ENCODE measurements at regions of chr3 and their contacts with region 1.

Region 1: GRCh38 chr3:123028233-123028828 is 768 bp upstream of the SEMA5B start:
- DNase-seq: peak in 2 of 5 donors; percentile 19 to 23
- H3K4me3 ChIP-seq: peak overlapping the region; percentile 47
- H3K4me3 Mint-ChIP-seq: peak overlapping the region; percentile 73 to 87 (median 83)
- H3K27ac ChIP-seq: no peak overlapping the region
- H3K27ac Mint-ChIP-seq: peak overlapping the region in 3 of 8 donors; percentile 1 to 24 (median 4)
- H3K4me1 ChIP-seq: peaks cover 5% of the 10 kb centered on the region
- H3K4me1 Mint-ChIP-seq: peaks cover 13 to 24% (median 15%) of the 10 kb centered on the region in 3 donors
- H3K27me3 ChIP-seq: peaks cover 46% of the 10 kb centered on the region
- H3K27me3 Mint-ChIP-seq: peaks cover 38 to 50% of the 10 kb centered on the region in 2 donors

Region 2: DNA sequence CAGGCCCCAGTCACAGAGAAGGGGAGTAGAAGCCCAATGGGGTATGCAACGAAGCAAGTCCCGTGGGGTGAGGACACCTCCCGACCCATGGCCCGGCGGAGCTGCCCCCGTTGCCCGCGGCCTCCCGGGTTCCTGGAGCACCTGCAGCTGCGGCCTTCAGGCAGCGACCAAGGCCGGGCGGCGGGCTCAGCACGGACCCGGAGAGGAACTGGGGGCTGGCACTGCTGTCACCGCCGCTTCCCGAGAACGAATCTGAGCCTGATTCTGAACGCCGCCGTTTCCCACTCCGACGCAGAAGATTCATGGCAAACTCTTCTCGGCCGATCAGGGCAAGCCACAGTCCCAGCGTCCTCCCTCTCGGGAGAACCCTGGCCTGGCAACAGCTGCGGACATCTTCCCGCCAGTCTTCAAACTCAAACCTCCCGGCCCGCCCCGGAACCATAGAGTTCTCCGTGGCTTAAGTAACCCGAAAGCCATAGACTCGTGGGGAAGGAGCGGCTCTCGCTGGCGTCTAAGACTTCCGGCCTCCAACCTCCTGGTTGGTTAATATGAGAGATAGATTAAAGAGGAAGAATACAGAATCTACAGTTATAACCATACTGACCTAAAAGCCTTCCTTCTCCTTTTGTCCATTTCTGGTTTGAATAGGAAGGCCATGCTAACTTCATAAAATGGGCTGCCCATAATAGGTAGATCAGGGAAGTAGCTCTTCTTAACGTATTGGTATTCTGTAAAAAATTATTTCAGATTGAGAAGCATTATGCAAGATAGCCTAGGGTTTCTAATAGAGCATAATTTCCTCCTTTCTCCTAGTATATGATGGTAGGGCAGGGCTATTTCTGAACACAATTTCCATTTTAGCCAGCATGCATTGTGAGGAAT is 1482.5 kb before region 1 on chr3 and contains the start of gene POLQ:
- CTCF ChIA-PET with region 1: interaction called, 11 read pairs
- POLR2A ChIA-PET with region 1: no interaction called
- DNase-seq: peak; percentile 74 to 91 (median 83)
- H3K4me3 ChIP-seq: peak within 1 kb of the TSS; percentile 78
- H3K4me3 Mint-ChIP-seq: peak within 1 kb of the TSS; percentile 83 to 95 (median 90)
- H3K27ac ChIP-seq: peak within 1 kb of the TSS; percentile 69
- H3K27ac Mint-ChIP-seq: peak within 1 kb of the TSS; percentile 80 to 92 (median 90)
- H3K4me1 ChIP-seq: no peaks in the 10 kb centered on the region
- H3K4me1 Mint-ChIP-seq: peaks cover 14 to 18% (median 15%) of the 10 kb centered on the region in 3 donors
- H3K27me3 ChIP-seq: no peaks in the 10 kb centered on the region
- H3K27me3 Mint-ChIP-seq: no peaks in the 10 kb centered on the region
- total RNA-seq, gene POLQ: 12.4 TPM

Region 3: GRCh38 chr3:122754929-122755328 is 273.4 kb before region 1 on chr3:
- CTCF ChIA-PET with region 1: interaction called, 11 read pairs
- POLR2A ChIA-PET with region 1: no interaction called
- DNase-seq: peak in 2 of 5 donors; percentile 23 to 29
- H3K4me3 ChIP-seq: no peak overlapping the region
- H3K4me3 Mint-ChIP-seq: no peak overlapping the region
- H3K27ac ChIP-seq: no peak overlapping the region
- H3K27ac Mint-ChIP-seq: peak overlapping the region in 1 of 8 donors; percentile 20
- H3K4me1 ChIP-seq: no peaks in the 10 kb centered on the region
- H3K4me1 Mint-ChIP-seq: peaks cover 0 to 5% (median 1%) of the 10 kb centered on the region in 3 donors
- H3K27me3 ChIP-seq: no peaks in the 10 kb centered on the region
- H3K27me3 Mint-ChIP-seq: no peaks in the 10 kb centered on the region

Region 4: GRCh38 chr3:123015557-123015956 is 12.8 kb before region 1 on chr3:
- CTCF ChIA-PET with region 1: interaction called, 13 read pairs
- POLR2A ChIA-PET with region 1: no interaction called
- DNase-seq: no peak
- H3K4me3 ChIP-seq: no peak overlapping the region
- H3K4me3 Mint-ChIP-seq: no peak overlapping the region
- H3K27ac ChIP-seq: no peak overlapping the region
- H3K27ac Mint-ChIP-seq: no peak overlapping the region
- H3K4me1 ChIP-seq: no peaks in the 10 kb centered on the region
- H3K4me1 Mint-ChIP-seq: no peaks in the 10 kb centered on the region
- H3K27me3 ChIP-seq: peaks cover 8% of the 10 kb centered on the region
- H3K27me3 Mint-ChIP-seq: peaks cover 13 to 43% of the 10 kb centered on the region in 2 donors